Activated CD4-positive, alpha-beta T cell treated with anti-CD3 and anti-CD28 coated beads for 36 hours (primary cell): ENCODE measurements at regions of chr14 and their contacts with region 1.

Region 1: GRCh38 chr14:92563359-92563758 is 49.8 kb downstream of the RIN3 start:
- DNase-seq: peak; percentile 41
- ATAC-seq: peak; percentile 87
- H3K4me3 Mint-ChIP-seq: no peak overlapping the region
- H3K27ac Mint-ChIP-seq: no peak overlapping the region
- H3K4me1 Mint-ChIP-seq: peaks cover 34% of the 10 kb centered on the region
- H3K27me3 Mint-ChIP-seq: no peaks in the 10 kb centered on the region

Region 2: GRCh38 chr14:92340931-92341330 is 222.4 kb before region 1 on chr14:
- CTCF ChIA-PET with region 1: no interaction called
- POLR2A ChIA-PET with region 1: no interaction called
- intact Hi-C with region 1: loop called in 1 of 2 experiments (anchors 1 kb)
- DNase-seq: peak; percentile 71
- ATAC-seq: peak; percentile 66
- H3K4me3 Mint-ChIP-seq: no peak overlapping the region
- H3K27ac Mint-ChIP-seq: peak overlapping the region; percentile 40
- H3K4me1 Mint-ChIP-seq: peaks cover 30% of the 10 kb centered on the region
- H3K27me3 Mint-ChIP-seq: peaks cover 34% of the 10 kb centered on the region

Region 3: DNA sequence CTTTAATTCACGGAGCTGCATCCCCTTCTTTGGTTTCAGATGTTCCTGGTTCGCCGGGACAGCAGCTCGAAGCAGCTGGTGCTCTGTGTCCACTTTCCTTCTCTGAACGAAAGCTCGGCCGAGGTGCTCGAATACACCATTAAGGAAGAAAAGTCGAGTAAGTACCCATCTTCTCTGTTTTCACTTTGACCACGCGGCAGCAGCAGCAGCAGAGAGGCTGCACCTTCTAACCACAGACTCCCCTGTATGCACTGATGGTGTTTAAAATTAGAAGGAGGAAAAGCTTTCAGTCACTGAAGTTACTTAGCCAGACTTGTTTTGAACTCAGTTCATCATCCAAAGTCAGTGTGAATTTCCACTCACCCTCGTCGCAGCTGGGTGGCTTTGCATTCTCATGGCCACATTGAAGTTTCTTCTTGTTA is 14.0 kb after region 1 on chr14:
- CTCF ChIA-PET with region 1: interaction called, 4 read pairs
- POLR2A ChIA-PET with region 1: interaction called, 5 read pairs
- intact Hi-C with region 1: loop called in 1 of 2 experiments (anchors 2 kb)
- DNase-seq: peak; percentile 54
- ATAC-seq: peak; percentile 78
- H3K4me3 Mint-ChIP-seq: peak overlapping the region; percentile 39
- H3K27ac Mint-ChIP-seq: peak overlapping the region; percentile 55
- H3K4me1 Mint-ChIP-seq: peaks cover 50% of the 10 kb centered on the region
- H3K27me3 Mint-ChIP-seq: no peaks in the 10 kb centered on the region

Region 4: GRCh38 chr14:92585981-92586937 is 22.9 kb after region 1 on chr14:
- CTCF ChIA-PET with region 1: interaction called, 6 read pairs
- POLR2A ChIA-PET with region 1: interaction called, 3 read pairs
- intact Hi-C with region 1: loop called (anchors 1 to 2 kb)
- DNase-seq: peak; percentile 43
- ATAC-seq: peak; percentile 79
- H3K4me3 Mint-ChIP-seq: no peak overlapping the region
- H3K27ac Mint-ChIP-seq: peak overlapping the region; percentile 68
- H3K4me1 Mint-ChIP-seq: peaks cover 85% of the 10 kb centered on the region
- H3K27me3 Mint-ChIP-seq: peaks cover 2% of the 10 kb centered on the region

Region 5: GRCh38 chr14:92644171-92644969 is 81.0 kb after region 1 on chr14:
- CTCF ChIA-PET with region 1: no interaction called
- POLR2A ChIA-PET with region 1: no interaction called
- intact Hi-C with region 1: no loop called
- DNase-seq: no peak
- ATAC-seq: no peak
- H3K4me3 Mint-ChIP-seq: no peak overlapping the region
- H3K27ac Mint-ChIP-seq: no peak overlapping the region
- H3K4me1 Mint-ChIP-seq: peaks cover 43% of the 10 kb centered on the region
- H3K27me3 Mint-ChIP-seq: no peaks in the 10 kb centered on the region

Region 6: GRCh38 chr14:92997343-92998061 is 434.1 kb after region 1 on chr14:
- CTCF ChIA-PET with region 1: no interaction called
- POLR2A ChIA-PET with region 1: no interaction called
- intact Hi-C with region 1: no loop called
- DNase-seq: no peak
- ATAC-seq: no peak
- H3K4me3 Mint-ChIP-seq: no peak overlapping the region
- H3K27ac Mint-ChIP-seq: no peak overlapping the region
- H3K4me1 Mint-ChIP-seq: no peaks in the 10 kb centered on the region
- H3K27me3 Mint-ChIP-seq: no peaks in the 10 kb centered on the region